ENCODE measurements at regions of chr4 and their contacts with region 1.

Region 1: GRCh38 chr4:64539234-64539849 is 130.1 kb upstream of the TECRL start:
- DNase-seq: peak in 4 of 6 donors; percentile 12 to 61 (median 44)
- ATAC-seq: peak; percentile 67 to 93 (median 90)
- H3K4me3 ChIP-seq: no peak overlapping the region
- H3K27ac ChIP-seq: no peak overlapping the region
- H3K4me1 ChIP-seq: no peaks in the 10 kb centered on the region
- H3K27me3 ChIP-seq: peaks cover 0 to 10% (median 4%) of the 10 kb centered on the region in 4 donors
- CTCF ChIP-seq: peak; percentile 34 to 75 (median 64)

Region 2: DNA sequence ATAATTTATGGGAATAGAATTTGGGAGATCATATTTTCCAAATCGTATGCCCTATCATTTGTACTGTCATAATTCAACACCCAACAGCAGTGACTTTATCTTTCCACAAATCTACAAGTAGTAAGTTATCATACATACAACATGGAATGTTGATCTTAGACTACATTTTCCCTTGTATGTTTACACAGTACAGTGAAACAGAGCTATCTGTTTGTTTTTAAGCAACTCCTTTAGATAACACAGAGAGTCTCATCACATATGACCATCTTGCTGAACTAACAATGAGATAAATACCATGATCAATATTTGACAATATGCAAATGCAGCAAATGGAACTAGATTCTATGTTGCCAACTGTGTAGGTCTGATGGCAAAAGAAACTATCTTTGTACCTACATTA is 376.3 kb before region 1 on chr4:
- intact Hi-C with region 1: loop called in 1 of 3 experiments (anchors 10 kb)
- DNase-seq: no peak
- ATAC-seq: no peak
- H3K4me3 ChIP-seq: no peak overlapping the region
- H3K27ac ChIP-seq: no peak overlapping the region
- H3K4me1 ChIP-seq: no peaks in the 10 kb centered on the region
- H3K27me3 ChIP-seq: no peaks in the 10 kb centered on the region
- CTCF ChIP-seq: no peak

Region 3: GRCh38 chr4:64584981-64585557 is 45.7 kb after region 1 on chr4:
- intact Hi-C with region 1: no loop called
- DNase-seq: no peak
- ATAC-seq: peak in 2 of 4 donors; percentile 44 to 49
- H3K4me3 ChIP-seq: no peak overlapping the region
- H3K27ac ChIP-seq: no peak overlapping the region
- H3K4me1 ChIP-seq: no peaks in the 10 kb centered on the region
- H3K27me3 ChIP-seq: no peaks in the 10 kb centered on the region
- CTCF ChIP-seq: peak in 3 of 4 donors; percentile 17 to 45 (median 34)